Dendritic cell treated with granulocyte-macrophage colony-stimulating factor and Interleukin-4, amounts not matched to agents 40 ng/mL and 50 ng/mL, for 4 days (primary cell): ENCODE measurements at regions of chr9 and their contacts with region 1.

Region 1: DNA sequence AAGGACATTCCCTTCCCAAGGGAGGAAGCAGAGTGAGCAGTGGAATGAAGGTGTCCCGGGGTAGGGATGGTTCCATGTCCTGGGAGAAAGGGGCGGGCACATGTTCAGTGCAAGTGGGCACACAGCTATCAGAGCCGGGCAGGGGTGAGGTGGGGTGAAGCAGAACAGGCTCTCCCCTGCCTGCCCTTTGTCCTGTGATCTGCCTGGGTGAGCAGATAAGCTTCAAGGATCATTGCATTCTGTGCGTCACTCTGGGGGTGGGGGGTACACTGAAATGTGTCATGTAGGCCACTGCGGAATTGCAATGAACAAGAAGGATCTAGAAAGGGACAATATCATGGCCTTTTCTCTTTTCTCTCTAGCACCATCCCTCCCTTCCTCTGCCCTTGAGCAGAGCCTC is 61.7 kb upstream of the SHB start:
- H3K4me3 Mint-ChIP-seq: no peak overlapping the region
- H3K27ac Mint-ChIP-seq: no peak overlapping the region
- H3K4me1 Mint-ChIP-seq: no peaks in the 10 kb centered on the region
- H3K27me3 Mint-ChIP-seq: peaks cover 21% of the 10 kb centered on the region

Region 2: GRCh38 chr9:38195737-38196161 is 65.0 kb after region 1 on chr9:
- intact Hi-C with region 1: loop called (anchors 10 kb)
- H3K4me3 Mint-ChIP-seq: no peak overlapping the region
- H3K27ac Mint-ChIP-seq: no peak overlapping the region
- H3K4me1 Mint-ChIP-seq: no peaks in the 10 kb centered on the region
- H3K27me3 Mint-ChIP-seq: peaks cover 1% of the 10 kb centered on the region